RWPE1 (cell line): ENCODE measurements at regions of chr5 and their contacts with region 1.

Region 1: GRCh38 chr5:173331956-173332479 is 3.8 kb upstream of the STC2 start:
- DNase-seq: peak; percentile 94
- H3K27ac ChIP-seq: peak overlapping the region; percentile 86
- CTCF ChIP-seq: peak; percentile 94

Region 2: DNA sequence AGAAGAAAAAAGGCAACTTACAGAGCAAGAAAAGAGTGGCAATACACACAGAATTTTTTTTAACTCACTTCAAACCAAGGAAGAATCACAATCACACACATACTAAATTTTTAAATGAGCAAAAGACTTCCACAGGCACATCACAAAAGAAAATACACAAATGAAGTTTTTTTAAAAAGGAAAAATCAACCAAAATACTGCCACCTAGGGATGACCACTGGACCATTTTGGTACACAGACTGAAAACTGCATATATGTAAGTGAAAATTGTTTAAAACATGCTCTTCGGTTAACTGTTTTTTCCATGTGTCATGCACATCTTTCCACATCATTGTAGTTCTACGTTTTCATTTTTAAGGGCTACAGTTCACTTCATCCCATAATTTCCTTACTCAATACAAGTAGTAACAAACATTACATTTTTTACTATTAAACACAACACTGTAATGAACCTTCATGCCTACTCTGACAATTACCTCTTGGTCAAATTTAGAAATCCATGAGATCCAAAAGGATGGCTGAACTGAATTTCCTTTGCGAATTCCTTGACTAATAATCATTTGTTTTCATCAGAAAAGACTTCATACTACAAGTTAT is 1404.6 kb before region 1 on chr5:
- CTCF ChIA-PET with region 1: no interaction called
- POLR2A ChIA-PET with region 1: no interaction called
- DNase-seq: no peak
- H3K27ac ChIP-seq: no peak overlapping the region
- CTCF ChIP-seq: peak; percentile 23; the same call in 1 of the 2 replicates

Region 3: DNA sequence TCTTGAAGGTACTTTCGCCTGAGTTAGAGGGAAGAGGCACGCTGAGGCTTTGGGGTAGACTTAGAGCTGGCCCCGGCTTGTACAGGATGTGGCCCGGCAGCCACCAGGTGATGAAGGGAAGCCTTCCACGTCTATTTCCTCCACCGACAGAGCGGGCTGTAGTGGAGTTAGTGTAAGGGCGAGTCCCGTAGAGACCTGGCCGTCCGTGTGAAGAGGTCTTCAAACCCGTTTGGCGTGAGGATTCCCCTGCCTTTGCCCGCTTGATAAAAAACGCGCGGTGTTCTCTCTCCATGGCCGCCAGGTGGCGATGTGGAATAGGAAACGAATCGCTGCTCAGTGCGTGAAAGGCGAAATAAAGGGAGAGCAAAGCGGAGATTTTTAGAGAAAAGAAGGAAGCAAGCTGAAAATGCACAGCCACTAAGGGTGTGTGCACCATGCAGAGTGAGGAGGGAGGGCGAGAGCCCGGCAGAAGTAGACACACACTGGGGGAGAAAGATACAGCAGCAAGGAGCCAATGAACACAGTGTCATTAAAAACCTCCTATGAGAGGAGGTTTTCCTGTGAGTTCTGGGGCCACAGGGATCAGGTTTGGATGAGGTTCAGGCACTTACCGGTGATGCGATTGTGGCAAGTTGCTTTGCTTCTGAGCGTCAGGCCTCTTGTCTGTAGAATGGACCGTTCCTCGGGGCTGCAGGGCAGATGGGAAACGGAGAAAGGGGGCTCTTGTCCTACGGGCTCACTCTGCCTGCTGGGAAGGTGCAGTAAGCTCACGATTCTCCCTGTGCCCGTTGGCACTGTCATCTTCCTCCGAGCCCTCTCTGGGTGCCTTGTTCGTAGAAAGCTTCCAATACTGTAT is 38.0 kb before region 1 on chr5:
- CTCF ChIA-PET with region 1: interaction called, 69 read pairs
- POLR2A ChIA-PET with region 1: no interaction called
- DNase-seq: peak; percentile 88
- H3K27ac ChIP-seq: no peak overlapping the region
- CTCF ChIP-seq: peak; percentile 93